Head of caudate nucleus (tissue), 42 donors: ENCODE measurements at regions of chr1 and their contacts with region 1.

Region 1: GRCh38 chr1:31182352-31182751 is 57.3 kb downstream of the NKAIN1 start:
- DNase-seq: peak; percentile 49 to 92 (median 73)

Region 2: DNA sequence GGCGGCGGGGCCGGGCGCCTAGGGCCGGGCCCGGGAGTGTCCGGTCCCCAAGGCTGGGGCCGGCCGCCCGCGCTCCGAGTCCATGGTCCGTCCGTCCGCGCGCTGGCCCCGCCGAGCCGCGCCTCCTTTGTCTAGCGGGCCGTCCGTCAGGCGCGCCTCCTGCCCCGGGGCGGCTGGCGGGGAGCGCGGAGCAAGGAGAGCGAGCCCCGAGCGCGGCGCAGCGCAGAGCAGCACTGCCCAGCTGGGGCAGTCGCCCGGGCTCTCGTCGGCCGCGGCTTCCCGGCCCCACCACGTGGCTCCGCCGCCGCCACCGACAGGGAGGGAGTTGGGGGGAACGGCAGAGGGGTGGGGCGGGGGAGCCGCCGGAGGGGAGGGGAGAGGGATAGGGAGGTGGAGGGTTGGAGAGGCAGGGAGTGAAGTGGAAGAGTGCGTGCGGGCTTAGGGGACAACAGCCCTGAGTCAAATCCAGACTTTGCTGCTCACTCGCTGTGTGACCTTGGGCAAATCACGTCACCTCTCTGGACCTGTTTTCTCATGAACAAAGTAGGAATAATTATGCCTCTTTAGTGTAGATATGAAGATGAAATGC is 57.4 kb after region 1 on chr1 and contains the start of gene NKAIN1:
- intact Hi-C with region 1: loop called (anchors 5 kb)
- DNase-seq: peak in 35 of 42 donors; percentile 15 to 83 (median 57)

Region 3: DNA sequence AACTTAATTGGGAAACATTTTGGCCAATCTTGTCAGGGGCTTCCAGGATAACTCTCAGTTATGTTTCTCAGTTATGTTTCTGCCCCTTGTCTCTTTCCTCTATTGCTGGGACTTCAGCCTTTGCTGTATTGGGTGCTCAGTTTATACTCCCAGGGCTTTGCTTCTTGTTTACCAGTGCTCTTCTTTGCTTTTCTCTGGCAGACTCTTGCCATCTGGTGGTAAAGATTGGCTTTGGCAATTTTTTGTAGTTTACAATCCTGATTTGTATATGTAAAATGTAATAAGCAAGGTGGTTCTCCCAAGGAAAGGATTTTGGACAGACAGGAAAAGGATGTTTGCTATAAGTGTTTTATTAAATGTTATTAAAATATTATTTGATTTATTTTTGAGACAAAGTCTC is 152.7 kb after region 1 on chr1:
- intact Hi-C with region 1: loop called (anchors 5 kb)
- DNase-seq: peak in 14 of 42 donors; percentile 10 to 64 (median 30)

Region 4: GRCh38 chr1:31422505-31423319 is 240.4 kb after region 1 on chr1:
- intact Hi-C with region 1: loop called (anchors 5 kb)
- DNase-seq: peak in 41 of 42 donors; percentile 37 to 91 (median 73)